Mammary epithelial cell (primary cell): ENCODE measurements at regions of chr18 and their contacts with region 1.

Region 1: DNA sequence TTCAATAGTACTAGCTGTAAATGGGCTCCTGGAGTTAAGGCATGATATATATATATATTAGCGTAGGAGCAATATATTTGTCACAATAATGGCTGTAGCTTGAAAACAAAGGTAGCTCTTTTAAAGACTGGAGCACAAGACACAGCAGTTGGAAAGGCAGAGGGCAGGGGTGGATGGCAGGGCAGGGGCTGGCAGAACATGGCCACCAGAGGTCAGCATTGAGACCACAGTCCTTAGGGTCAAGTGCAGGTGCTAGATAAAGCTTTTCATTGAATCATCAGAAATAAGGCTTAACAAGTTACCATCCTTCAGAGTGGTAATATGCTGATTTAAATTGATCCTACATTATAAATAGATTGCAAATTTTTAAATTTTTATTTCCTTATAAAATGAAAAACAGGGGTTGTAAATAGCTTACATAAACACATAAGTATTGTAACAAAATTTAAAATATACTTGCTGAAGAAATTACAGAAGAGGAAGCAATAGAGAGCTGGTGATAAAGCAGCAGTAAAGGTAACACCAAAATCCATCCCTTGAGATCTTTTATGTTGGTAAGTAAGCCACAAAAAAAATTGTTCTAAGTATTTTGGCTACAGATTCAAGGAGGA is 161.2 kb upstream of the PIEZO2 start:
- DNase-seq: peak; percentile 19
- H3K4me3 ChIP-seq: no peak overlapping the region
- H3K27ac ChIP-seq: no peak overlapping the region
- H3K4me1 ChIP-seq: no peaks in the 10 kb centered on the region
- H3K27me3 ChIP-seq: no peaks in the 10 kb centered on the region
- CTCF ChIP-seq: peak; percentile 70 to 83

Region 2: GRCh38 chr18:11357678-11358077 is 47.1 kb after region 1 on chr18:
- CTCF ChIA-PET with region 1: no interaction called
- dilution Hi-C with region 1: loop called (anchors 5 kb)
- in situ Hi-C with region 1: no loop called
- intact Hi-C with region 1: no loop called
- DNase-seq: no peak
- H3K4me3 ChIP-seq: no peak overlapping the region
- H3K27ac ChIP-seq: no peak overlapping the region
- H3K4me1 ChIP-seq: no peaks in the 10 kb centered on the region
- H3K27me3 ChIP-seq: peaks cover 2% of the 10 kb centered on the region
- CTCF ChIP-seq: no peak

Region 3: GRCh38 chr18:11512096-11513030 is 201.8 kb after region 1 on chr18:
- CTCF ChIA-PET with region 1: interaction called, 26 read pairs
- dilution Hi-C with region 1: no loop called
- in situ Hi-C with region 1: loop called in 1 of 2 experiments (anchors 5 kb)
- intact Hi-C with region 1: loop called (anchors 1 kb)
- DNase-seq: peak; percentile 51
- H3K4me3 ChIP-seq: no peak overlapping the region
- H3K27ac ChIP-seq: no peak overlapping the region
- H3K4me1 ChIP-seq: no peaks in the 10 kb centered on the region
- H3K27me3 ChIP-seq: no peaks in the 10 kb centered on the region
- CTCF ChIP-seq: peak; percentile 76 to 81